Left cardiac atrium (tissue), 4 donors: ENCODE measurements at regions of chr2 and their contacts with region 1.

Region 1: GRCh38 chr2:32522770-32523169 is 105.1 kb upstream of the TTC27 start:
- DNase-seq: no peak
- ATAC-seq: no peak

Region 2: GRCh38 chr2:32484937-32485336 is 37.8 kb before region 1 on chr2:
- intact Hi-C with region 1: loop called in 1 of 2 experiments (anchors 5 kb)
- DNase-seq: no peak
- ATAC-seq: peak in 1 of 2 donors; percentile 91